Activated naive CD4-positive, alpha-beta T cell treated with anti-CD3 and anti-CD28 coated beads for 36 hours (primary cell): ENCODE measurements at regions of chr6 and their contacts with region 1.

Region 1: DNA sequence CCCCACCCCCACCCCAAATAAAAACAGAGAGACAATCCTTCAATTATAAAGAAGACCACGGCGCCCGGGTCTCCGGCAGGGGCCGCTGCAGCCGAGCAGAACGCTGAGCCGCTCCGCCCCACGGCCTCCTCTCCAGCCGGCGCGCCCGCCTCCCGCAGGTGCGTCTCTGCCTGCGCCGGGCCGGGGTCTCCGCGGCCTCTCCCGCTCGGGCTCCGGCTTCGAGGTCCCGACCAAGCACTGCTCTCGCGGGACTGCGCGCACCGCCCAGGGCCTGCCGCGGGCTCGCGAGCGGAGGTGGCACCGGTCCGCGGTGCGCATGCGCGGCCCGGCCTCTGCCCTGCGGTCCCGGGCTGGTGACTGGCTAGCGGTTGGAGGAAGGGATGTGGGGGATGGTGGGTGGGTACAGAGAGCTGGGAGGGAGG is 241 bp upstream of the SIRT5 start:
- DNase-seq: peak; percentile 91
- H3K4me3 Mint-ChIP-seq: peak overlapping the region; percentile 92
- H3K27ac Mint-ChIP-seq: peak overlapping the region; percentile 97
- H3K4me1 Mint-ChIP-seq: peaks cover 19% of the 10 kb centered on the region
- H3K27me3 Mint-ChIP-seq: no peaks in the 10 kb centered on the region

Region 2: GRCh38 chr6:13328076-13328874 is 245.9 kb before region 1 on chr6 and contains the start of gene TBC1D7:
- CTCF ChIA-PET with region 1: interaction called, 32 read pairs
- intact Hi-C with region 1: loop called (anchors 1 kb)
- DNase-seq: peak; percentile 94
- H3K4me3 Mint-ChIP-seq: peak within 1 kb of the TSS; percentile 95
- H3K27ac Mint-ChIP-seq: peak within 1 kb of the TSS; percentile 93
- H3K4me1 Mint-ChIP-seq: peaks cover 18% of the 10 kb centered on the region
- H3K27me3 Mint-ChIP-seq: no peaks in the 10 kb centered on the region
- total RNA-seq, gene TBC1D7: 25.4 to 27.1 TPM

Region 3: GRCh38 chr6:13383328-13384163 is 190.6 kb before region 1 on chr6:
- CTCF ChIA-PET with region 1: interaction called, 6 read pairs
- intact Hi-C with region 1: loop called (anchors 1 kb)
- DNase-seq: peak; percentile 46
- H3K4me3 Mint-ChIP-seq: no peak overlapping the region
- H3K27ac Mint-ChIP-seq: no peak overlapping the region
- H3K4me1 Mint-ChIP-seq: peaks cover 13% of the 10 kb centered on the region
- H3K27me3 Mint-ChIP-seq: no peaks in the 10 kb centered on the region

Region 4: GRCh38 chr6:13511913-13512717 is 62.0 kb before region 1 on chr6:
- CTCF ChIA-PET with region 1: interaction called, 13 read pairs
- intact Hi-C with region 1: no loop called
- DNase-seq: no peak
- H3K4me3 Mint-ChIP-seq: no peak overlapping the region
- H3K27ac Mint-ChIP-seq: no peak overlapping the region
- H3K4me1 Mint-ChIP-seq: no peaks in the 10 kb centered on the region
- H3K27me3 Mint-ChIP-seq: no peaks in the 10 kb centered on the region

Region 5: DNA sequence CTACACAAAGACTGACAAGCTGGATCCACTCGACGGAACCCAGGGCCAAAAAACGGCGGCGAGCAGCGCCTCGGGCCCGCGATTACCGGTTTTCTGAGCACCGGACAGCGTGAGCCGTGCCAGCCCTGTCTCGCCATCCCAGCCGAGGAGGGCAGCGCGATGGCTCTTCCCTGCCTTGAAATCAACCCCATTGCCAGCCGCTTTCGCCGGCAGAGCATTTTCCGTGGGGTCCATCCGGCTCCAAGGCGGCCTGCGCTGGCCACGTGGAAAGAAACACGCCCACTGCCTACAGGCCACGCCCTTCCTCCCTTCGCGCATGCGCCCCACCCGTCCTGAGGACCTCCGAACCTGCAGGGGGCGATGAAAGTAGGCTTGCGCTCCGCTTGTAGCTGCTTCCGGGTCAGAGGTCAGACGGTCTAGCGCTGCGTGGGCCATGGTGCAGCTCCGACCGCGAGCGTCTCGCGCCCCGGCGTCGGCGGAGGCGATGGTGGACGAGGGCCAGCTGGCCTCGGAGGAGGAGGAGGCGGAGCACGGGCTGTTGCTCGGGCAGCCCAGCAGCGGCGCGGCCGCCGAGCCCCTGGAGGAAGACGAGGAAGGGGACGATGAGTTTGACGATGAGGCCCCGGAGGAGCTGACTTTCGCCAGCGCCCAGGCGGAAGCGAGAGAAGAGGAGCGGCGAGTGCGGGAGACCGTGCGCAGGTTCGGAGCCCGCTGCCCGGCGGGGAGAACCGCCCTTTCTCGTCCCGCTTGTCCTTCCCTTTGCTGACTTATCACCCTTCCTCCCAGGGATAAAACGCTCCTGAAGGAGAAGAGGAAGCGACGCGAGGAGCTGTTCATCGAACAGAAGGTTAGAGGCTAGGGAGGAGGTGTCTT is 41.0 kb after region 1 on chr6 and contains the start of gene NOL7:
- CTCF ChIA-PET with region 1: interaction called, 18 read pairs
- intact Hi-C with region 1: loop called (anchors 1 kb)
- DNase-seq: peak; percentile 99
- H3K4me3 Mint-ChIP-seq: peak within 1 kb of the TSS; percentile 99
- H3K27ac Mint-ChIP-seq: peak within 1 kb of the TSS; percentile 93
- H3K4me1 Mint-ChIP-seq: peaks cover 51% of the 10 kb centered on the region
- H3K27me3 Mint-ChIP-seq: no peaks in the 10 kb centered on the region
- total RNA-seq, gene NOL7: 79.5 to 80.8 TPM

Region 6: GRCh38 chr6:13733178-13733887 is 159.2 kb after region 1 on chr6:
- CTCF ChIA-PET with region 1: no interaction called
- intact Hi-C with region 1: no loop called
- DNase-seq: no peak
- H3K4me3 Mint-ChIP-seq: no peak overlapping the region
- H3K27ac Mint-ChIP-seq: no peak overlapping the region
- H3K4me1 Mint-ChIP-seq: peaks cover 9% of the 10 kb centered on the region
- H3K27me3 Mint-ChIP-seq: peaks cover 5% of the 10 kb centered on the region

Region 7: DNA sequence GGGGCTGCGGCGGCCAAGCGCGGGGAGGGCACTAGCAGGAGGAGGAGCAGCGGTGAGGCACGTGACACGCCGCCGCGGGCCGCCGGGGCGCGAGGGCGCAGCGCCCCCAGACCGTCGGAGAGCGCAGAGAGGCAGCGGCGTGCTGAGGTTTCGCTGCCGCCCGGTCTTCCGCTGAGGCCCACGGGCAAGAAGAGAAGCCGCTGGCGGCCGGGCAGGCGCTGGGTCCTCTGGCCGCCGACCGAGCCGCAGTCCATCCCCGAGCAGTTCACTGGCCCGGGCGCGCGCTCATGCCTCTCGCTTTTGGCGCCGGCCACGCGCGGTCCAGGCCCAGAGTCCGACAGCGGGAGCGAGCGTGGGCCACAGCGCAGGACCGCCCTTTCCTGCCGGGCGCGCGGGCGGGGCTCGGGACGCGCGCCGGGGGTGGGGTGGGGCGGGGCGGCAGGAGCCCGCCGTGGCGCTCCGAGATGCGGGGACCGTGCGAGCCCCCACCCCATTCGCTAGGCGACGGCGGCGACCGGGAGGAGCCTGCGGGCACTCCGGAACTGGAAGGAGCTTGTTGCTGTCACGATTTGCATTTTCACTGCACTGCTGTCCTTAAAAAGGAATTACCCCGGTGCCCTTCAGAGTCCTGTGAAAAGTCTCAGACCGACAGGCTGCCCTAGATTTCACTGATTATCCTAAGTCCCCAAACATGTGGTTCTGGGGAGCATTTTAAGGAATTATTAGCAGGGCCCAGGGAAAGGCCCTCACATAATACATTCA is 240.2 kb after region 1 on chr6 and contains the start of gene MCUR1:
- CTCF ChIA-PET with region 1: no interaction called
- intact Hi-C with region 1: loop called (anchors 1 kb)
- DNase-seq: peak; percentile 85
- H3K4me3 Mint-ChIP-seq: peak within 1 kb of the TSS; percentile 83
- H3K27ac Mint-ChIP-seq: peak within 1 kb of the TSS; percentile 82
- H3K4me1 Mint-ChIP-seq: peaks cover 28% of the 10 kb centered on the region
- H3K27me3 Mint-ChIP-seq: no peaks in the 10 kb centered on the region
- total RNA-seq, gene MCUR1: 27.1 to 28.3 TPM